Psoas muscle (tissue), 8 donors: ENCODE measurements at regions of chr13 and their contacts with region 1.

Region 1: DNA sequence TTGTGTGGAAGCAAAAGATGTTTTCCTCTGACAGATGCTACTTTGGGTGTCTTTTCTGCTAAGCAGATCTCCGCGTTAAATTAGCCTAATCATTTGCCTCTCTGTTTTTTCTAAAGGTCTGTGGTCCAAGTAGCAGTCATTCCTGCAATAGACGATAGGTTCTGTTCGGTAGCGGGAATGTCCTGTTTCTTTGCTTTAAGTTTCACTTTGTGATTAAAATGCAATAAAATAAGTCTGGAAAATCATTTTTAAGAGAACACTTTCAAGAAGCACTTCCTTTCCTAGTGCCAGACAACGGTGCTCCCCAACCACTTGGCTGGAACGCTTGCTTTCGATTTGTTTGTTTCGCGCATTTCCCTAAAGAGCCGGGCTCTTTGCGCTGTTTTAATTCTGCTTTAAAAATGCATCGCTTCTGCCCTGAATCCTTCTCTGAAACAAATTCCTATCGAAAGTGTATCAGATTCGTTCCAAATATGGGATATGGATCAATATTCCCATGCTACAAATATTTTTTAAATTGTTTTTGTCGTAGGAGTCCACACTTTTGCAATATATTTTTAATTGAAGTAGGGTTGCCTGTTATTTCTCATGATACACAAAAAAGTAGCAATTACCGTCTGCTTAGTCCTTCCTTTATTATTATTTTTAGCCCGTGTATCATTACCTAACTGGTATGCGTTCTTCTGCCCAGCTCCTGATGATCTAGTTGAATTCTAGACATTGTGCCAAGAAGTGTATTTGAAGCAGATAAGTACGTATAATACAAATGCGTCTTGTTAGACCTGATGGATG is 14.2 kb downstream of the ZIC2 start:
- DNase-seq: no peak
- ATAC-seq: no peak
- H3K4me3 ChIP-seq: no peak overlapping the region
- H3K27ac ChIP-seq: no peak overlapping the region
- H3K4me1 ChIP-seq: no peaks in the 10 kb centered on the region
- H3K27me3 ChIP-seq: peaks cover 12 to 98% (median 35%) of the 10 kb centered on the region in 3 donors
- CTCF ChIP-seq: no peak

Region 2: GRCh38 chr13:99766641-99767045 is 229.1 kb before region 1 on chr13:
- intact Hi-C with region 1: no loop called
- DNase-seq: no peak
- ATAC-seq: no peak
- H3K4me3 ChIP-seq: no peak overlapping the region
- H3K27ac ChIP-seq: no peak overlapping the region
- H3K4me1 ChIP-seq: no peaks in the 10 kb centered on the region
- H3K27me3 ChIP-seq: no peaks in the 10 kb centered on the region
- CTCF ChIP-seq: no peak

Region 3: GRCh38 chr13:99871249-99871898 is 124.4 kb before region 1 on chr13:
- intact Hi-C with region 1: no loop called
- DNase-seq: no peak
- ATAC-seq: no peak
- H3K4me3 ChIP-seq: no peak overlapping the region
- H3K27ac ChIP-seq: no peak overlapping the region
- H3K4me1 ChIP-seq: no peaks in the 10 kb centered on the region
- H3K27me3 ChIP-seq: no peaks in the 10 kb centered on the region
- CTCF ChIP-seq: no peak

Region 4: GRCh38 chr13:99955747-99956472 is 39.9 kb before region 1 on chr13:
- intact Hi-C with region 1: loop called in 1 of 2 experiments (anchors 5 kb)
- DNase-seq: peak in 1 of 2 donors; percentile 40
- ATAC-seq: peak in 2 of 4 donors; percentile 17 to 51
- H3K4me3 ChIP-seq: peak overlapping the region; percentile 49
- H3K27ac ChIP-seq: no peak overlapping the region
- H3K4me1 ChIP-seq: peaks cover 22% of the 10 kb centered on the region
- H3K27me3 ChIP-seq: peaks cover 5 to 97% (median 57%) of the 10 kb centered on the region in 3 donors
- CTCF ChIP-seq: no peak

Region 5: GRCh38 chr13:100129605-100130004 is 133.8 kb after region 1 on chr13:
- intact Hi-C with region 1: no loop called
- DNase-seq: no peak
- ATAC-seq: no peak
- H3K4me3 ChIP-seq: no peak overlapping the region
- H3K27ac ChIP-seq: no peak overlapping the region
- H3K4me1 ChIP-seq: peaks cover 7% of the 10 kb centered on the region
- H3K27me3 ChIP-seq: no peaks in the 10 kb centered on the region
- CTCF ChIP-seq: no peak